Activated CD4-positive, alpha-beta memory T cell treated with anti-CD3 and anti-CD28 coated beads for 36 hours (primary cell): ENCODE measurements at regions of chr3 and their contacts with region 1.

Region 1: DNA sequence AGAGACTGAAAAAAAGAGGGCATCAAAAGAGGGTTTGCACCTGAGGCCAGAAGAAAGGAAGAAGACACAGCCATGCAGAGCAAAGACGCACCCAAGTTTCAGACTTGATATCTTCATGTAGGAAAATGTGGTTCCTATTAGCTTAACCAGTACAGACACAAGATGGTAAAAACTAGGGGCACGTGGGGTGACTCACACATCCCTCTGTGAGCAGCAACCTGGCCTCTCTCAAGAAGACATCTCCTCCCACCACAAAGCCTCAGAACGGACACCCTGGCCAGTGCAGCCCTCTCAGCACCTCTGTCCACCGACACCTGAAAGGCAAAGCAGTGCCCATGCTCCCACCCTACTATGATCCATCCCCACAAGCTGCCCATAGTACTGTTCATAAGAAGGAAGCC is 33.3 kb downstream of the GLB1 start:
- DNase-seq: peak; percentile 83
- H3K4me3 Mint-ChIP-seq: peak overlapping the region; percentile 56
- H3K27ac Mint-ChIP-seq: peak overlapping the region; percentile 93
- H3K4me1 Mint-ChIP-seq: peaks cover 79% of the 10 kb centered on the region
- H3K27me3 Mint-ChIP-seq: no peaks in the 10 kb centered on the region

Region 2: DNA sequence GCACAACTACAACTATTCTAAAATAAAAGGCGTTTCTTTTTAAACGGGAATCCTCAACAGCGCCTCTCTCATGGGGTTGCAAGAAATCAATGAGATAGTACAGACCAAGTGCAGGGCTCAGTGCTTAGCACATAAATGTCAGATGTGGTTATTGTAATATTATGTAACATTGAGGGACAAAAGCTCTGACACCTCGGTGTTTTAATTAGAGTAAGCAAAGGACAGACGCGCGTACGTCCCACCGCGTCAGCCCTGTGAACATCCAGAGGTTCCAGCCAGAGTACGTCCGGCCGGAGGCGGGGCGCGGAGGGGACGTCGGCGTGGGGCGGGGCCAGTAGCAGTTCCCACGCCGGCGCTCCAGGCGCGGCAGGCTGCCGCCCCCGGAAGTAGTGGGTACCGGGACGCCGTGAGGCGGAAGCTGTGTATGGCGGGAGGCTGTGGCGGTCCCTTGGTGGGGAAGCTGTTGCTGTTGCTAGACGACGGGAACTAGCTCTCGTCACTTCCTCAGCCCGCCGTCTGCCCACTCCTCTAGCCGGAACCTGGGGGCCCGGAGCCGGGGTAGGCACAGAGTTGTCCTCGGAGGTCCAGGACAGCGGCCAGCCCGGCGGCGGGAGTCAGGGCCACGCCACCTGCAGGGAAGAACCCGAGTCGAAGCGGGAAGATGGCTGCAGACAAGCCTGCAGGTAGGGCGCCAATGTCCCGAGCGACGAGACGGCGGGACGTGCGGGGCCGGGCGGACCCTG is 378.7 kb before region 1 on chr3 and contains the start of gene CNOT10:
- CTCF ChIA-PET with region 1: no interaction called
- POLR2A ChIA-PET with region 1: no interaction called
- intact Hi-C with region 1: loop called (anchors 10 kb)
- DNase-seq: peak; percentile 98
- H3K4me3 Mint-ChIP-seq: peak within 1 kb of the TSS; percentile 91
- H3K27ac Mint-ChIP-seq: peak within 1 kb of the TSS; percentile 91
- H3K4me1 Mint-ChIP-seq: peaks cover 33% of the 10 kb centered on the region
- H3K27me3 Mint-ChIP-seq: no peaks in the 10 kb centered on the region
- total RNA-seq, gene CNOT10: 52.4 to 54.7 TPM

Region 3: GRCh38 chr3:32998631-32999451 is 64.8 kb before region 1 on chr3:
- CTCF ChIA-PET with region 1: interaction called, 4 read pairs
- POLR2A ChIA-PET with region 1: interaction called, 79 read pairs
- intact Hi-C with region 1: no loop called
- DNase-seq: no peak
- H3K4me3 Mint-ChIP-seq: peak overlapping the region; percentile 59
- H3K27ac Mint-ChIP-seq: peak overlapping the region; percentile 86
- H3K4me1 Mint-ChIP-seq: peaks cover 87% of the 10 kb centered on the region
- H3K27me3 Mint-ChIP-seq: no peaks in the 10 kb centered on the region

Region 4: DNA sequence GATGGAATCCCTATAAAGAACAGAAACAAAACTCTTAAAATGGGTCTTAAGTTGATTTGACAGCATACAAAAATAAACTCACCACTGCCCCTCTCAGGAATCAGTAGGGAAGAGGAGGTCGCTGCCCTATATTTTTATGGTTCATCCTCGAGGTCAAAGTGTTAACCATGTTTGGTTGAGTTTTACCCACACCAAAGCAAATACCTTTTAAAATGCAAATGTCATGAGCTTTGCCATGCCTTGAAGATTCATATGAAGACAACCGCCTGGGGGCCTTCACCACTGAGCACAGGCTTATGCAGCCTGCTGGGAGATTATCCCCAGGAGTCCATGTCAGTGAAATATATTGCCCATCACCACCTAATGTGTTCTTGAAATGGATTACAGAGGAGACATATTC is 32.8 kb before region 1 on chr3:
- CTCF ChIA-PET with region 1: interaction called, 24 read pairs
- POLR2A ChIA-PET with region 1: interaction called, 24 read pairs
- intact Hi-C with region 1: loop called (anchors 1 kb)
- DNase-seq: peak; percentile 72
- H3K4me3 Mint-ChIP-seq: peak overlapping the region; percentile 36
- H3K27ac Mint-ChIP-seq: peak overlapping the region; percentile 76
- H3K4me1 Mint-ChIP-seq: peaks cover 34% of the 10 kb centered on the region
- H3K27me3 Mint-ChIP-seq: no peaks in the 10 kb centered on the region

Region 5: GRCh38 chr3:33089515-33089914 is 25.9 kb after region 1 on chr3:
- CTCF ChIA-PET with region 1: no interaction called
- POLR2A ChIA-PET with region 1: no interaction called
- intact Hi-C with region 1: loop called (anchors 2 kb)
- DNase-seq: no peak
- H3K4me3 Mint-ChIP-seq: no peak overlapping the region
- H3K27ac Mint-ChIP-seq: no peak overlapping the region
- H3K4me1 Mint-ChIP-seq: peaks cover 84% of the 10 kb centered on the region
- H3K27me3 Mint-ChIP-seq: no peaks in the 10 kb centered on the region

Region 6: DNA sequence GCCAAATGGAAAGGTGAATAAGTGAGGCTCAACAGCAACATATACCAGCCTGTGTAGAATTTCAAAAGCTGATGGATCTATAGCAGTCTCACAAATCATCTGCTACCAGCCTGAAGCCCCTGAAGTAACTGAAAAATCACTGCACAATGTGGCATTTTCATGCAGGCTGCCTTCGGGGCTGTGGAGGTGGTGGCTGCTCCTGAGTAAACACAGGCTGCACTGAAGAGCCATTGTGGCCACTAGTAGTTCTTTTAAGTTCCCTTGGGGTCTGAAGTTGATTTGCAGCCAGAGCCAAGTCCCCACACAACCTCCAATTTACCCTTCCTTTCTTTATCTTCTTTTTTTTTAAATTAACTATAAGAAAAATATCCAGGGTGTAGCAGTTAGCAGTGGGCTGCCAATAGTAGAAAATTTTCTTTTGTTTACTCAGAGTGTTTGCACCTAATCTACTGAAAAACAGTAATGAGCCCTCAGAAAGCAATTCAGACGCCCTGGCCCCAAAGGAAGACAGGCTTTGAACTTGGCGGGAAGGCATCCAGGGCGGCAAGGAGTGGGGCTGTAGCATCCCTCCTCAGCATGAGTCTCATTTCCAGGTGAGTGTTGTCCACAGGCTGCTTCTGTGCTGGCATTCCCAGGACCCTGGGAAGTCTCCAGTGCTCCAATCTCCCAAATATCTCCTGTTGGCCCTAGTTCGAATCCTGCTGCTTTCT is 168.3 kb after region 1 on chr3:
- CTCF ChIA-PET with region 1: no interaction called
- POLR2A ChIA-PET with region 1: no interaction called
- intact Hi-C with region 1: no loop called
- DNase-seq: no peak
- H3K4me3 Mint-ChIP-seq: no peak overlapping the region
- H3K27ac Mint-ChIP-seq: no peak overlapping the region
- H3K4me1 Mint-ChIP-seq: no peaks in the 10 kb centered on the region
- H3K27me3 Mint-ChIP-seq: peaks cover 22% of the 10 kb centered on the region

Region 7: DNA sequence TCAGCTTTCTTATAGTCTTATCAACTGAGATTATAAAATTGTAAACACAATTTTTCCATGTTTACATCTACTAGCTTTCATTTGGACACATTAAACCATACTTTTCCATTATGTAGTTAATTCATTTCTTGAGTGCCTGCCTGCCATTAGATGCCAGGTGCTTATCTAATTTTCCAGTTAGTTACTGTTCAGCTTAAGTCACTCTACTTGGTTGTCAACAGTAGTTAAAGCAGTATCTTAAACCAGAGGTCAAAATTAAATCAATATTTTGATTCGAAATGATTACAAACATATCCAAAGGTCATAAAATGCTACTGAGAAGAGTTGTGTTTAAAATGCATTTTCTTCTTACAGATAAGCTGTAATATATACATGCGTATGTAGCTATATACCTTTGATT is 432.8 kb after region 1 on chr3:
- CTCF ChIA-PET with region 1: no interaction called
- POLR2A ChIA-PET with region 1: no interaction called
- intact Hi-C with region 1: no loop called
- DNase-seq: no peak
- H3K4me3 Mint-ChIP-seq: no peak overlapping the region
- H3K27ac Mint-ChIP-seq: no peak overlapping the region
- H3K4me1 Mint-ChIP-seq: no peaks in the 10 kb centered on the region
- H3K27me3 Mint-ChIP-seq: no peaks in the 10 kb centered on the region